ENCODE measurements at regions of chr4 and their contacts with region 1.

Region 1: GRCh38 chr4:48016141-48017103 is at the starts of genes CNGA1 and NIPAL1:
- DNase-seq: peak; percentile 70
- ATAC-seq: peak; percentile 92
- H3K4me3 Mint-ChIP-seq: peak within 1 kb of the TSS; percentile 83
- H3K27ac Mint-ChIP-seq: no peak within 1 kb of the TSS
- H3K4me1 Mint-ChIP-seq: peaks cover 13% of the 10 kb centered on the region
- H3K27me3 Mint-ChIP-seq: peaks cover 40% of the 10 kb centered on the region
- CTCF ChIP-seq: no peak
- total RNA-seq, gene CNGA1: not detected in 2 replicates
- total RNA-seq, gene NIPAL1: 0.69 and 0.73 TPM in 2 replicates

Region 2: DNA sequence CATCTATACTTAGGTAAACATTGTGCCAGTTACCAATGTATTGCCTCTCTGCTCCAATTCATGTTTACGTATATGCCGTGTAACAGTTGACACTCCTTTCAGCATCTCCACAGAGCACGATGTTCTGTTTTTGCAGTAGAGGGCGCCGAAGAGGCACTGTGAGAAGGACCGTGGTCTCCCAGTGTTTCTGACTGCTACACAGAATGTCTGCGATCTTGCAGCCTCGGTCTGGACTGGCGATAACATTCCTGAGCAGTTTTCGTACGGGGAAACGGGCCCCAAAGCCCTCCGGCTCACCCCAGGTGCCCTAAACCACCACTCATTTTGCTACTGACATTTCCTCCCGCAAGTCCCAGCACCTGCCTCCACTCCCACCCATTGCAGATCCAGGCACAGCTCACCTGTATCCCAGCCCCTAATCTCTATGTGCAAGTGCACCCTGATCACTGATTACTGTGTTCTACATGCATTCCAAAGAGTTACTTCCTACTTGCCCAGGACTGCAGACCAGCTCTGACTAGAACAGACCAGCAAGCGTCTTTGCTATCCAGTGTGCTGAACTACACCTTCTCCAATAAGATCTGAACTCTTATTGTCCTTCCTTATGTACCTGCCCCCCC is 89.7 kb before region 1 on chr4:
- CTCF ChIA-PET with region 1: no interaction called
- POLR2A ChIA-PET with region 1: no interaction called
- intact Hi-C with region 1: loop called (anchors 5 kb)
- DNase-seq: no peak
- ATAC-seq: peak; percentile 85
- H3K4me3 Mint-ChIP-seq: peak overlapping the region; percentile 44
- H3K27ac Mint-ChIP-seq: no peak overlapping the region
- H3K4me1 Mint-ChIP-seq: peaks cover 26% of the 10 kb centered on the region
- H3K27me3 Mint-ChIP-seq: peaks cover 8% of the 10 kb centered on the region
- CTCF ChIP-seq: no peak

Region 3: GRCh38 chr4:48033825-48034413 is 17.5 kb after region 1 on chr4:
- CTCF ChIA-PET with region 1: interaction called, 9 read pairs
- POLR2A ChIA-PET with region 1: interaction called, 3 read pairs
- intact Hi-C with region 1: loop called (anchors 1 kb)
- DNase-seq: no peak
- ATAC-seq: peak; percentile 69
- H3K4me3 Mint-ChIP-seq: no peak overlapping the region
- H3K27ac Mint-ChIP-seq: peak overlapping the region; percentile 36
- H3K4me1 Mint-ChIP-seq: peaks cover 46% of the 10 kb centered on the region
- H3K27me3 Mint-ChIP-seq: peaks cover 2% of the 10 kb centered on the region
- CTCF ChIP-seq: peak; percentile 23

Measured in activated B cell treated with CpG ODN at 0.5 μM for 24 hours (primary cell).